ENCODE measurements at regions of chr12 and their contacts with region 1.

Region 1: DNA sequence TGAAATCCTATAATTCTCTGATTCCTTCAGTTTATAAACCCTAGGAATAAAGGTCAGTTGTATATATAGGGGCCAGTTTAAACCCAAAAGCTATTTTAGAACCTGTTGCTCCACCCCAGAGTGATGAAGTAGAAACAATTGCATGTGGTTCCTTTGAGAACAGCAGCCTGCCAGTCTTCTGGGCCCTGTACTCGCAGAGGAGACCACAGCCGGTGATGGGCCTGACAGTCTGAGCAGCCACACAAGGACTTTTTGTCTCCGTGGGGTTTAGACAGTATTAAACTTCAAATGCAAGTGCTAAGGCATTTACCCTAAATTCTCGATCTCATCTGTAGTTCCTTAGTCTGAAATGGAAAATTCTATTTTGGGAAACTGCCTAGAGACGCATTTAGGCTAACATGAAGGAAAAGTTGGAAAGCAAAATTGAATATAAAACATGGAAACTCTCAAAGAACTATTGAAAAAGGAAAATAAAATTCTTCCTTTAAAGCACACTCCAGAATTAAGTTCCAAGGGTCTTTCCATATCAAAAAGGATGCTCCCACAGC is 80.6 kb downstream of the PRICKLE1 start:
- DNase-seq: no peak
- H3K4me3 ChIP-seq: no peak overlapping the region
- H3K27ac ChIP-seq: no peak overlapping the region
- H3K4me1 ChIP-seq: no peaks in the 10 kb centered on the region
- H3K27me3 ChIP-seq: no peaks in the 10 kb centered on the region
- CTCF ChIP-seq: no peak

Region 2: GRCh38 chr12:40717576-40717975 is 1791.4 kb before region 1 on chr12:
- CTCF ChIA-PET with region 1: interaction called, 14 read pairs
- dilution Hi-C with region 1: no loop called
- in situ Hi-C with region 1: no loop called
- intact Hi-C with region 1: no loop called
- DNase-seq: no peak
- H3K4me3 ChIP-seq: no peak overlapping the region
- H3K27ac ChIP-seq: no peak overlapping the region
- H3K4me1 ChIP-seq: no peaks in the 10 kb centered on the region
- H3K27me3 ChIP-seq: no peaks in the 10 kb centered on the region
- CTCF ChIP-seq: no peak